ENCODE measurements at regions of chr9 and their contacts with region 1.

Region 1: GRCh38 chr9:2087500-2088313 is 72.6 kb downstream of the SMARCA2 start:
- DNase-seq: no peak
- H3K4me3 Mint-ChIP-seq: no peak overlapping the region
- H3K27ac Mint-ChIP-seq: no peak overlapping the region
- H3K4me1 Mint-ChIP-seq: peaks cover 19% of the 10 kb centered on the region
- H3K27me3 Mint-ChIP-seq: no peaks in the 10 kb centered on the region

Region 2: DNA sequence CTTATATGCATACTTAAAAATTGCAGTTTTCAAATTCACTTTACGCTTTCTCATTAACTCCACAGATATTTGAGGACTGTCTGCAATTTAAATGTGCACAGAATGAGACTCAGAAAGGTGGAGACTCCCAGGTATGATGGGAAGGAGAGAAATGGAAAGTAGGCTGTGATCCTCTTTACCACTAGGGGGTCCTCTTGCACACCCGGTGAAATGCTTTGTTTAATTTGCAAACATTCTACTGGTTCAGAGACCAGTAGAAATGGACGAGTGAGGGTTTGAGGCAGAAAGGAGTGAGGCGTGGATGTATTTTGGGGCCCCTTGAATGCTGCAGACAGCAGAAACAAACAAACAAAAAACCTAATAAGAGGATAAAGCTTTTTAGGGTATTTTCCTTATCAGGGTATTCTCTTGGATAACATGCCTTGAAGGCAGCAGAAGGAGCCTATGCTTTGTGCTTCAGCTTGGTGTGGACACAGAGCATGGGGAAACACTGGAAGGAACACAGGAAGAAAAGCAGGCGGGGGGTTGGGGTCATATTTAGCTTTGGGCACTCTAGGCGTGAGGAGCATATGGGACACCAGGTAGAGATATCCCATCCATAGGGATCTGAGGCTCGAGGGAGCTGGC is 627.5 kb before region 1 on chr9:
- intact Hi-C with region 1: loop called (anchors 10 kb)
- DNase-seq: no peak
- H3K4me3 Mint-ChIP-seq: no peak overlapping the region
- H3K27ac Mint-ChIP-seq: no peak overlapping the region
- H3K4me1 Mint-ChIP-seq: no peaks in the 10 kb centered on the region
- H3K27me3 Mint-ChIP-seq: peaks cover 5% of the 10 kb centered on the region

Region 3: GRCh38 chr9:1726993-1727759 is 360.5 kb before region 1 on chr9:
- intact Hi-C with region 1: loop called (anchors 1 kb)
- DNase-seq: no peak
- H3K4me3 Mint-ChIP-seq: no peak overlapping the region
- H3K27ac Mint-ChIP-seq: no peak overlapping the region
- H3K4me1 Mint-ChIP-seq: no peaks in the 10 kb centered on the region
- H3K27me3 Mint-ChIP-seq: peaks cover 1% of the 10 kb centered on the region

Region 4: GRCh38 chr9:1939926-1940368 is 147.8 kb before region 1 on chr9:
- intact Hi-C with region 1: loop called (anchors 5 kb)
- DNase-seq: peak; percentile 5
- H3K4me3 Mint-ChIP-seq: no peak overlapping the region
- H3K27ac Mint-ChIP-seq: no peak overlapping the region
- H3K4me1 Mint-ChIP-seq: no peaks in the 10 kb centered on the region
- H3K27me3 Mint-ChIP-seq: peaks cover 5% of the 10 kb centered on the region

Region 5: DNA sequence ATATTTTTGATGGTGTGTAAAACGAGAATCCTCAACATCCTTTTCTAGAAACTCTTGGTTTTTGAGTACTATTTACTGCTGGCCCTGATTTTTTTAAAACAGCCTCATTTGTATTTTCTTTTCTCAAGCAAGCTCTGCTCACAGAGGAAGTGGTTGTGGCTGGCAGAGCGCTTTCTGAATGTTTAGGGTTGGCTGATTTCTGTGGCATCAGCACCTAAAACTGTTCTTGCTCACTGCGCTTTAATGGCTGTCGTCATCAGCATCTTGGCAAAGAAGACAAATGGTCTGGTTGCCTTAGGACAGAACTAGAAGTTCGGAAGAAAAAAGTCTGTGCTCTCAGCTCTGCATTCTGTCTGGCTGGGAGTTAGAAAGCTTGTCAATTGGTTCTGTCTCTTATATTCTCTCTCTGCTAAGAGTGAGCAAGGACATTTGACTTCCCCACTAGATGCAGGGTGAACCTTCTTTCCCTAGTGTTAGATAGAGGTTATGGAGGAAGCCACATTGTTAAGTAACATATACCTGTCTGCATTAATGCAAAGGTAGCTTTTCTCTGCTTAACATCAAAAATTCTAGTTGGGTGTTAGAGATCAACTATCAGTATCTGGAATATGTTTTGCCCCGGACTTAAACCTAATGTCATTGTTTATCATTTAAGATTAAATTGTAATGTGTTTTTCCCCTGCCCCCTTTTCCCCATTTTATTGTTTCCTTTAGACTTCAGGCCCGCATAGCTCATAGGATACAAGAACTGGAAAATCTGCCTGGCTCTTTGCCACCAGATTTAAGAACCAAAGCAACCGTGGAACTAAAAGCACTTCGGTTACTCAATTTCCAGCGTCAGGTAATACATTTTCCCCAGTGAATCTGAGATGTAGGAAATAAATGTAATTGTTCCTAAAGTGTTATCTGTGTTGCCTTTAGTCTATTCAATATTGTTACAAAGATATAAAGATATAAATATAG is 33.5 kb before region 1 on chr9:
- intact Hi-C with region 1: loop called (anchors 1 kb)
- DNase-seq: peak; percentile 68
- H3K4me3 Mint-ChIP-seq: peak overlapping the region; percentile 24
- H3K27ac Mint-ChIP-seq: peak overlapping the region; percentile 56
- H3K4me1 Mint-ChIP-seq: peaks cover 48% of the 10 kb centered on the region
- H3K27me3 Mint-ChIP-seq: no peaks in the 10 kb centered on the region

Region 6: DNA sequence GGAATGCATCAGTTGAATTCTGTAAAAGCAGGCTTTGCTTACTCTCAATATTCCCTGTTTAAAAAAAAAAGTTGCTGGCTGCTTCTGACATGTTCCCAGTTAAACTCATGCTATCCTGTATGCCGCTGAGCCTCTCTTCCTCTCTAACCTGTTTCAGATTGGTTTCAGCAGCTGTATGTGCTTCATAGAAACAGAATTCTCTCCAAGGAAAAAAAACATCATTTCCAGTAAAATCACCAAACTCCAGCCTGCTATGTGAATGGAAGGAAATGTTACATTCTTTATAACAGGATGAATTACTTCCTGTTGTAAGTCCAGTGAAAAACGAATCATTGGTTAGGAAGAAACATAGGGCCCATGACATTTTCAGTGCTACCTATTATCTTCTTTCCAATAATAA is 603.9 kb after region 1 on chr9:
- intact Hi-C with region 1: no loop called
- DNase-seq: no peak
- H3K4me3 Mint-ChIP-seq: no peak overlapping the region
- H3K27ac Mint-ChIP-seq: no peak overlapping the region
- H3K4me1 Mint-ChIP-seq: no peaks in the 10 kb centered on the region
- H3K27me3 Mint-ChIP-seq: no peaks in the 10 kb centered on the region

Measured in activated T-helper 1 cell treated with anti-CD3 and anti-CD28 coated beads, Interleukin-12 subunit alpha, Interleukin-12 subunit beta, Interleukin-2, Interleukin-4 antibody, amounts not matched to agents 30 ng/mL and 10 ng/mL and 1 ng/mL, durations not matched to agents 14 hours and 24 hours and 36 hours (primary cell).